Activated CD4-positive, alpha-beta memory T cell treated with anti-CD3 and anti-CD28 coated beads for 36 hours (primary cell): ENCODE measurements at regions of chr4 and their contacts with region 1.

Region 1: GRCh38 chr4:17810260-17811077 is at the starts of genes DCAF16 and NCAPG:
- DNase-seq: peak; percentile 99
- H3K4me3 Mint-ChIP-seq: peak within 1 kb of the TSS; percentile 94
- H3K27ac Mint-ChIP-seq: peak within 1 kb of the TSS; percentile 97
- H3K4me1 Mint-ChIP-seq: peaks cover 44% of the 10 kb centered on the region
- H3K27me3 Mint-ChIP-seq: no peaks in the 10 kb centered on the region
- total RNA-seq, gene DCAF16: 33.9 to 34.1 TPM
- total RNA-seq, gene NCAPG: 76.7 to 79.8 TPM

Region 2: GRCh38 chr4:17336524-17336961 is 473.9 kb before region 1 on chr4:
- CTCF ChIA-PET with region 1: no interaction called
- POLR2A ChIA-PET with region 1: no interaction called
- intact Hi-C with region 1: loop called (anchors 2 kb)
- DNase-seq: peak; percentile 87
- H3K4me3 Mint-ChIP-seq: peak overlapping the region; percentile 44
- H3K27ac Mint-ChIP-seq: peak overlapping the region; percentile 75
- H3K4me1 Mint-ChIP-seq: peaks cover 33% of the 10 kb centered on the region
- H3K27me3 Mint-ChIP-seq: no peaks in the 10 kb centered on the region

Region 3: DNA sequence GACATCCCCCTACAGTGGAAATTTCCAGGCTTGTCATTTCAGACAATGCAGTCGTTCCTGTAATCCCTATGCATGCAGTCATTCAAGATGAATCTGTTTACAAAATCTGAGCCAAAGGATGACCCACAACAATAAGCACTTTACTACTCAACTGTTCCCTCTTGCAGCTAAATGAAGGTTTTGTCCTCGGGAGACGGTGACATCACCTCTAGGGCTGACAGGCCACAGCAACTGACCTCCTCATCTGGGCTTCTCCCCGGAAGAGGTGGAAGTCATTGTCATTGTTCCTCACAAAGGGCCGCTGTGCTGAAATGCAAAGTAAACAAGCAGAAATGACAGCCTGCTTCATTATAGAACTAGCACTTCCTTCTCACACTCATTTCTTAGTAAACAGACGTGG is 266.3 kb before region 1 on chr4:
- CTCF ChIA-PET with region 1: interaction called, 46 read pairs
- POLR2A ChIA-PET with region 1: no interaction called
- intact Hi-C with region 1: loop called (anchors 1 kb)
- DNase-seq: no peak
- H3K4me3 Mint-ChIP-seq: no peak overlapping the region
- H3K27ac Mint-ChIP-seq: no peak overlapping the region
- H3K4me1 Mint-ChIP-seq: no peaks in the 10 kb centered on the region
- H3K27me3 Mint-ChIP-seq: peaks cover 13% of the 10 kb centered on the region

Region 4: DNA sequence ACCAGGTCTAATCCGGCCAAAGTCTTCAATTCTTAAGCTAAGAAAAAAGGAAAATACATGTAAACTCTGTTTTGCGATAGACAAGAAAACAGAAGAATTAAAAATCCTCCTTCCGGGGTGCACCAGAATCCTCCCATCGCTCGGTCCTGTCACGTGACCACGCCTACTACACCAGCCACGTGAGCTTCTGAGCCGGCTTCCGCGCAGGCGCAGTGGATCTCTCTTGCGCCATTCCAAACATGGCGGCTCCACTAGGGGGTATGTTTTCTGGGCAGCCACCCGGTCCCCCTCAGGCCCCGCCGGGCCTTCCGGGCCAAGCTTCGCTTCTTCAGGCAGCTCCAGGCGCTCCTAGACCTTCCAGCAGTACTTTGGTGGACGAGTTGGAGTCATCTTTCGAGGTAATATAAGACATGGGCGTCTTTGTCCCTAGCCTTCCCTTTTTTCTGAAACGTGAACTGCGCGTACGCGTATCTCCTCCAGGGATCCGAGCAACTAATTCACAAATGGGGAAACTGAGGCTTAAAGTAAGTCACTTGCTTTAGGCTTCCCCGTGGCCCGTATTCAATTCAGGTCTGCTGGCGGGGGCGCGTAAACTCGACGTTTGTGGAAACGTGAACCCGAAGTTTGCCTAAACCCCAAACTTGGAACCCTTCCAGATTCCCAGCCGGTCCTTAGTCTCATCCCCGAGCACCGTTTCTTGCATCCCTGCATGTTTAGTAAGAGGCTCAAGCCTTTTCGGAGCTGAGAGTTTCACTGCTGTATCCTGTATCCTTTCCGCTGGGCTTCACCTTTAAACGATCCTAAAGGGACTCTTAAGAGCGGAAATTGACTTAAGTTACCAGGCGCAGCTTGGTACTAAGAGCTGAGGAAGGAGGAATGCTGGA is 195.8 kb before region 1 on chr4 and contains the start of gene MED28:
- CTCF ChIA-PET with region 1: interaction called, 7 read pairs
- POLR2A ChIA-PET with region 1: interaction called, 5 read pairs
- intact Hi-C with region 1: loop called (anchors 1 kb)
- DNase-seq: peak; percentile 97
- H3K4me3 Mint-ChIP-seq: peak within 1 kb of the TSS; percentile 100
- H3K27ac Mint-ChIP-seq: peak within 1 kb of the TSS; percentile 97
- H3K4me1 Mint-ChIP-seq: peaks cover 48% of the 10 kb centered on the region
- H3K27me3 Mint-ChIP-seq: peaks cover 3% of the 10 kb centered on the region
- total RNA-seq, gene MED28: 52.9 to 54.5 TPM

Region 5: DNA sequence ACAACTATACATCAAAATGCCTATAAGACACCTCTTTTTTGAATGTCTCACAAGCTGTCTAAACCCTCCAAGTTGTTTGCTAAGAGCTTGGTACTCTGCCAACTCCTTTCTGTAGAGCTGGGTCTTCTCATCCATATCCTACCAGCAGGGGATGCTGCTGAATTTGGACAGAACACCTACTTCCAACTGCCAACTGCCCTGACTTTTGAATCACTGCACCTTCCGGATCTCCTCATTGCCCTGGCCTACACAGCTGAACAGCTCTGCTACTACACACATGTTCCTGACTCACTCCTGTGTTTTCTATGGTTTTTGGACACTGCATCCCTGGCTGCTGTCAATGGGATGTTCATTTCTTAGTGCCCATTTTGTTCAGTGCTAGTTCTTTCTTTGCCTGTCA is 47.7 kb before region 1 on chr4:
- CTCF ChIA-PET with region 1: interaction called, 5 read pairs
- POLR2A ChIA-PET with region 1: no interaction called
- intact Hi-C with region 1: loop called (anchors 1 kb)
- DNase-seq: no peak
- H3K4me3 Mint-ChIP-seq: no peak overlapping the region
- H3K27ac Mint-ChIP-seq: no peak overlapping the region
- H3K4me1 Mint-ChIP-seq: no peaks in the 10 kb centered on the region
- H3K27me3 Mint-ChIP-seq: peaks cover 3% of the 10 kb centered on the region

Region 6: GRCh38 chr4:18021722-18022571 is 211.5 kb after region 1 on chr4 and contains the start of gene LCORL:
- CTCF ChIA-PET with region 1: interaction called, 10 read pairs
- POLR2A ChIA-PET with region 1: no interaction called
- intact Hi-C with region 1: loop called (anchors 1 kb)
- DNase-seq: peak; percentile 91
- H3K4me3 Mint-ChIP-seq: peak within 1 kb of the TSS; percentile 91
- H3K27ac Mint-ChIP-seq: peak within 1 kb of the TSS; percentile 78
- H3K4me1 Mint-ChIP-seq: peaks cover 13% of the 10 kb centered on the region
- H3K27me3 Mint-ChIP-seq: peaks cover 37% of the 10 kb centered on the region
- total RNA-seq, gene LCORL: 8.1 to 10.5 TPM